ENCODE measurements at regions of chr1 and their contacts with region 1.

Region 1: GRCh38 chr1:201309426-201309825 is 26.1 kb downstream of the PKP1 start:
- DNase-seq: peak; percentile 80
- ATAC-seq: peak; percentile 91
- H3K4me3 ChIP-seq: no peak overlapping the region
- H3K27ac ChIP-seq: no peak overlapping the region
- H3K4me1 ChIP-seq: peaks cover 10% of the 10 kb centered on the region
- H3K27me3 ChIP-seq: peaks cover 1 to 13% of the 10 kb centered on the region in 2 experiments; a peak in 2 of 5 replicates
- CTCF ChIP-seq: peak; percentile 84
- EP300 ChIP-seq: no peak
- POLR2A ChIP-seq: no peak
- RAD21 ChIP-seq: peak; percentile 38; the same call in 1 of the 2 replicates

Region 2: DNA sequence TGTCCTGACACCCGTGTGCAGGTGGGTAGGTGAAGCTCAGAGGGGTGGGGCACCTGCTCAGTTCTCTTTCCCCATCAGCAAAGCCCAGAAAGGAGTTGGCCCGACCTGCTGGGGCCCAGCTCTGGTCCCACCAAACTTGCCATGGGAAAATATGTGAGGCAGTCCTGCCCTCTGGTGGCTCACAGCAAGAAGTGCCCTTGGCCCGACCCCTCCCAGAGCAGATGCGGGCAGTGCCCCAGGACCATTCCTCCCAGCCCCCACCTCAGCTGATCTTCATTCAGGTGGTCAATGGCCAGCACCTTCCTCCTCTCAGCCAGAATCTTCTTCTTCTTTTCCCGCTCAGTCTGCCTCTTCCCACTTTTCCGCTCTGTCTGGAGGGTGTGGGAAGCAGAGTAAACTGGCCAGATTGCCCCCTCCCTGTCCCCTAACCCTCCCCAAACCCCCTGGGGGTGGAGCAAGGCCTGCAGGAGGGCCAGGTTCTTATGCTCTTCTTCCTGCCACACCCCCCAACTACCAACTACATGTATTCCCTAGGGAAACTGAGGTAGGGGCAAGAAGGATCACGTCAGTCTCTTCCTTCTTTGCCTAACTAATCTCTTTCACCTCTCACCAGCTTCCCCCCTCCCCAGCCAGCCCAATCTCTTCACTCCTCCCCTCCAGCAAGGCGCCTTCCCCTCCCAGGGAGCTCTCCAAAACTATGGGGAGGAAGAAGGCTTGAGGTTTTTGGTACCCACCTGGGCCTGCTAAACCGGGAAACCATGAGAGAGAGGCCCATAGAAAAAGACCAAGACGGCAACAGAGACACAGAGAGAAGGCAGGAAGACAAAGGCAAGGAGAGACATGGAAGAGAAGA is 52.5 kb after region 1 on chr1:
- CTCF ChIA-PET with region 1: no interaction called
- POLR2A ChIA-PET with region 1: no interaction called
- in situ Hi-C with region 1: no loop called
- intact Hi-C with region 1: loop called (anchors 1 kb)
- DNase-seq: peak; percentile 28
- ATAC-seq: peak; percentile 83
- H3K4me3 ChIP-seq: no peak overlapping the region
- H3K27ac ChIP-seq: no peak overlapping the region
- H3K4me1 ChIP-seq: no peaks in the 10 kb centered on the region
- H3K27me3 ChIP-seq: peaks cover 9 to 34% of the 10 kb centered on the region in 2 experiments
- CTCF ChIP-seq: peak; percentile 85
- EP300 ChIP-seq: no peak
- POLR2A ChIP-seq: no peak
- RAD21 ChIP-seq: peak; percentile 82

Measured in HepG2 (cell line).